ENCODE measurements at regions of chr15 and their contacts with region 1.

Region 1: DNA sequence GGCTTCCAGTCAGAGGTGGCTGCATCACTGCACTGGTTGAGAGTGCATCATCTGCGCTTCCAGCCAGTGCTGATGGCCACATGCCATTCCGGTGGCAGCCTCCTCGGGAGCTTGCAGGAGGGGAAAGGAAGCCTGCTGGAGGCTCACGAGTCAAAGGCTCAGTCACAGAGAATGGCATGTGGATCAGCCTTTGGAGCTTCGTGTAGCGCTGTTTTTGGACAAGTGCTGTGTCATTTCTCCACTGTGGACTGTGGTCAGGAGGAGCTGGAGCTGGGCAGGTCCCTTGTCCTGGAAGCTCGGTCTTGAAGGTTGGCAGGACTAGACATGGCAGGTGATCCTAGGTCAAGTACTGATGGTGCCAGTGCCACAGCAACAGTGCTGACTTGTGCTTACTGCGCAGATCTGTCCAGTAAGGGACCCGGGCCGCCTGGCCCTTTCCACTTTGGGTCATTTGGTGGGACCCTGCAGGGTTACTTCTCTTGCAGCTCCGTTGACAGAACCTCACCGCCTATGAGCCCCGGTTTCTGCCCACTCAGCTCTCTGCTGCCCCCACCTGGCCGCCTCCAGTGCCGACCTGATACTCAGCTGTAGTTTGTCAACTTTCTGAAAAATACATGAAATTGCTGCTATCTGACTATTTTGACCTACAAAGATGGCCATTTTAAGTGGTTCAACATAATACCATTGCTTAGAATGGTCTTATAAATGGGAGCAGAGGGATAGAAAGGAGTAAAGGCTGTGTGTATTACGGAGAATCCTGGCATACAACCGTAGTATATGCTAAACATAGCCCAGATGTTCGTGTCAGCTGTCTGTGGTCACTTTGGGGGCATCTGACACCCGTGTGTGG is 27.6 kb upstream of the TRPM1 start:
- DNase-seq: peak; percentile 66
- H3K4me3 ChIP-seq: no peak overlapping the region
- H3K27ac ChIP-seq: no peak overlapping the region
- H3K4me1 ChIP-seq: peaks cover 5% of the 10 kb centered on the region
- CTCF ChIP-seq: peak; percentile 99

Region 2: GRCh38 chr15:30889196-30889595 is 239.9 kb before region 1 on chr15:
- CTCF ChIA-PET with region 1: no interaction called
- POLR2A ChIA-PET with region 1: no interaction called
- intact Hi-C with region 1: loop called (anchors 2 kb)
- DNase-seq: no peak
- H3K4me3 ChIP-seq: no peak overlapping the region
- H3K27ac ChIP-seq: no peak overlapping the region
- H3K4me1 ChIP-seq: no peaks in the 10 kb centered on the region
- CTCF ChIP-seq: no peak

Region 3: GRCh38 chr15:31427411-31427810 is 298.3 kb after region 1 on chr15:
- CTCF ChIA-PET with region 1: no interaction called
- POLR2A ChIA-PET with region 1: no interaction called
- intact Hi-C with region 1: no loop called
- DNase-seq: no peak
- H3K4me3 ChIP-seq: no peak overlapping the region
- H3K27ac ChIP-seq: no peak overlapping the region
- H3K4me1 ChIP-seq: no peaks in the 10 kb centered on the region
- CTCF ChIP-seq: no peak